Caco-2 (cell line): ENCODE measurements at regions of chr3 and their contacts with region 1.

Region 1: DNA sequence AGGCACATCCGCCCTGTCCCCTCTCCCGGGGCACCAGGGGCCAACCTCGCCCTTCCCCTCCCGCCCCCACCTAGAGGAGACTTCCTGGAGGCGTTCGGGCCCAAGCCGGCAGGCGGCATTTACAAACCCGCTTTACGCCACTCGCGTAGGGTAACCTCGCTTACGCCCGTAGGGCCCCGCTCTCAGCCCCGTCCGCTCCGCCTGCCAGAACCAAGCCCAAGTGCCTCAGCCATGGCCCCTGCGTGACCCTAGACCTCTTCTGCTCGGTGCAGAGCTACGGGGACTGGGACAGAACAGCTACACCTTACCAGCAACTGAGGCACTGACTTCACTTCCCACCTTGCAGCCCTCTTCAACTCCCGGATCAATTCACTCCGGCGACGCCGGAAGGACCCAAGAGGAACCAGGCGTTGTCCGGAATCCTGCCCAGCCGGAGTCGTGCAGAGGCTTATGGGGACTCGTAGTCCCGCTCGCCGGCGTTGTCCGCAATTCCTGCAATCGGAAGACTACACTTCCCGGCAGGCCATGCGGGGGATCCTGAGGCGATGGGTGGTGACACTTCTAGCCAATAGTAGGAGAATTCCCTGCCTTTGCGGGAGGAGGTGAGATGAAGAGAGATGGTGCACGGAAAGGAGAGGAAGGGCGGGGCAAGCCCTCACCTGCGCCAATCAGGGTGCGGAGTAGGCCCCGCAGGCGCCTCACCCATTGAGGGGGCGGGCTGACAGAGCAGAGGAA is at the start of gene PDCD10:
- DNase-seq: peak; percentile 97 to 98
- H3K4me3 ChIP-seq: peak within 1 kb of the TSS; percentile 84
- H3K4me3 Mint-ChIP-seq: no peak within 1 kb of the TSS
- H3K27ac Mint-ChIP-seq: no peak within 1 kb of the TSS
- H3K4me1 ChIP-seq: 0 out of 2 replicates have a peak, but pooled peaks cover 6% of the 10 kb centered on the region
- H3K4me1 Mint-ChIP-seq: peaks cover 20% of the 10 kb centered on the region
- H3K27me3 ChIP-seq: no peaks in the 10 kb centered on the region
- H3K27me3 Mint-ChIP-seq: no peaks in the 10 kb centered on the region
- CTCF ChIP-seq: no peak
- total RNA-seq, gene PDCD10: 65.7 and 65.8 TPM in 2 replicates

Region 2: GRCh38 chr3:167684388-167684993 is 50.2 kb before region 1 on chr3:
- CTCF ChIA-PET with region 1: no interaction called
- POLR2A ChIA-PET with region 1: no interaction called
- intact Hi-C with region 1: loop called (anchors 2 kb)
- DNase-seq: peak; percentile 41 to 73
- H3K4me3 ChIP-seq: no peak overlapping the region
- H3K4me3 Mint-ChIP-seq: no peak overlapping the region
- H3K27ac Mint-ChIP-seq: no peak overlapping the region
- H3K4me1 ChIP-seq: no peaks in the 10 kb centered on the region
- H3K4me1 Mint-ChIP-seq: peaks cover 5% of the 10 kb centered on the region
- H3K27me3 ChIP-seq: no peaks in the 10 kb centered on the region
- H3K27me3 Mint-ChIP-seq: no peaks in the 10 kb centered on the region
- CTCF ChIP-seq: peak; percentile 64

Region 3: GRCh38 chr3:167700046-167700445 is 34.6 kb before region 1 on chr3:
- CTCF ChIA-PET with region 1: no interaction called
- POLR2A ChIA-PET with region 1: no interaction called
- intact Hi-C with region 1: loop called (anchors 5 kb)
- DNase-seq: no peak
- H3K4me3 ChIP-seq: no peak overlapping the region
- H3K4me3 Mint-ChIP-seq: no peak overlapping the region
- H3K27ac Mint-ChIP-seq: no peak overlapping the region
- H3K4me1 ChIP-seq: no peaks in the 10 kb centered on the region
- H3K4me1 Mint-ChIP-seq: peaks cover 6% of the 10 kb centered on the region
- H3K27me3 ChIP-seq: no peaks in the 10 kb centered on the region
- H3K27me3 Mint-ChIP-seq: no peaks in the 10 kb centered on the region
- CTCF ChIP-seq: no peak

Region 4: DNA sequence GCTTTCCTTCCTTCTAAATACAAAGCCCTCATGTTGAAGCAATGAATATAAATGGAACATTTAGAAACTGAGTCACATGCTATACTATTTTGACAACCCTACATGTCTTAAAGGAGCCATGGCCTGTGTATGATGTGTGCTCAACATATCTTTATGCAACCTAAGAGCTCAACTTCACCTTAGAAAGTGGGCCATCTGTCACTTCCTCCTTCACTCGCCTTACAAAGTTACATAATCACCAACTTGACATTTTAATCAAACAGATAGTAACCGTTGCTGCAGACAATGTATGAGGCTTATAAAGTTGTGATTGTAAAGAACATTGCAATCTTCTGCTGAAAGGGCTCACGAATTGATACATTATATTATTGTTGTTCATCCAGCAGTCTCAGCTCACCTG is 164.4 kb after region 1 on chr3:
- CTCF ChIA-PET with region 1: no interaction called
- POLR2A ChIA-PET with region 1: no interaction called
- intact Hi-C with region 1: no loop called
- DNase-seq: no peak
- H3K4me3 ChIP-seq: no peak overlapping the region
- H3K4me3 Mint-ChIP-seq: no peak overlapping the region
- H3K27ac Mint-ChIP-seq: no peak overlapping the region
- H3K4me1 ChIP-seq: no peaks in the 10 kb centered on the region
- H3K4me1 Mint-ChIP-seq: no peaks in the 10 kb centered on the region
- H3K27me3 ChIP-seq: no peaks in the 10 kb centered on the region
- H3K27me3 Mint-ChIP-seq: peaks cover 3% of the 10 kb centered on the region
- CTCF ChIP-seq: no peak

Region 5: DNA sequence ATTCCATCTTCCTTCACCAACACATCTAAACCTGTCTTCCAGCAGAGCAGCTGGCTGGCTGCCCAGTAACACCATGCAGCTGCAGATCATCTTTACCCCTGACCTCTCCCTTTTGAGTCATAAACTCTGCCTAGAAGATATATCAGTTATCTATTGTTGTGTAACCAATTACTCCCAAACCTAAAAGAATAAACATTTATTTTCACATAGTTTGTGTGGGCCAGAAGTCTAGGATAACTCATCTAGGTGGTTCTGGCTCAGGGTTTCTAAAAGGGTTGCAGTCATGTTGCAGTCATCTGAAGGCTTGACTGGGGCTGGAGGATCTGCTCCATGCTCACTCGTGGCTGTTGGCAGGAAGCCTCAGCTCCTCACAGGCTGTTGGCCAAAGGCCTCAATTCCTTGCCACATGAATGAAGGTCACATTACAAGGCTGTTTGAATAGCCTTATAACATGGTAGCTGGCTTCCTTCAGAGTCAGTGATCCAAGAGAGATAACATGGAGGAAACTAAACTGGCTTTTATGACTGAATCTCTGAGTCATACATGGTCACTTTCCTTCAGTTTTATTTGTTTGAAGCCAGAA is 268.2 kb after region 1 on chr3:
- CTCF ChIA-PET with region 1: no interaction called
- POLR2A ChIA-PET with region 1: no interaction called
- intact Hi-C with region 1: no loop called
- DNase-seq: peak in 1 of 2 experiments; percentile 5
- H3K4me3 ChIP-seq: no peak overlapping the region
- H3K4me3 Mint-ChIP-seq: no peak overlapping the region
- H3K27ac Mint-ChIP-seq: no peak overlapping the region
- H3K4me1 ChIP-seq: peaks cover 14% of the 10 kb centered on the region
- H3K4me1 Mint-ChIP-seq: no peaks in the 10 kb centered on the region
- H3K27me3 ChIP-seq: no peaks in the 10 kb centered on the region
- H3K27me3 Mint-ChIP-seq: no peaks in the 10 kb centered on the region
- CTCF ChIP-seq: no peak